ENCODE measurements at regions of chr11 and their contacts with region 1.

Region 1: DNA sequence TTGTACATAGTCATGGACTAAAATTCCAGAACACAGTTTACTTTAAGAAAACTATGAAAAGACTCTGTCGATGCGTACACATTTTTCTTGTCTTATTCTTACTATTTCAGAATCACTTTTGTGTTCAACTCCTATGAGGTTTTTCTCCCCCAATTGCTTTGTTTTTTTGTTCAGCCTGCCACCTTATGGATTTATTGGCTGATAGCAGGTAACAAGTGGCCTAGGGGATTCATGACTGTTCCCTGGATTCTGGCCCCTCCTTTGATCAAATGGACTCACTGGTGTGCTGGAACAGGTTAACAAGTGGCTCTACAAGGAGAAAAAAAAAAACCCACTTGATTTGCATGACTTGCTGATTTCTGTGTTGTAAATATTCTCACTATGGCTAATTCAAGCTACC is 10.6 kb downstream of the MMP20 start:
- DNase-seq: no peak
- ATAC-seq: no peak
- H3K4me3 ChIP-seq: no peak overlapping the region
- H3K4me3 Mint-ChIP-seq: no peak overlapping the region
- H3K27ac ChIP-seq: no peak overlapping the region
- H3K27ac Mint-ChIP-seq: no peak overlapping the region
- H3K4me1 ChIP-seq: peaks cover 17 to 26% of the 10 kb centered on the region in 2 donors
- H3K4me1 Mint-ChIP-seq: peaks cover 26% of the 10 kb centered on the region
- H3K27me3 ChIP-seq: no peaks in the 10 kb centered on the region
- H3K27me3 Mint-ChIP-seq: no peaks in the 10 kb centered on the region
- CTCF ChIP-seq: no peak

Region 2: DNA sequence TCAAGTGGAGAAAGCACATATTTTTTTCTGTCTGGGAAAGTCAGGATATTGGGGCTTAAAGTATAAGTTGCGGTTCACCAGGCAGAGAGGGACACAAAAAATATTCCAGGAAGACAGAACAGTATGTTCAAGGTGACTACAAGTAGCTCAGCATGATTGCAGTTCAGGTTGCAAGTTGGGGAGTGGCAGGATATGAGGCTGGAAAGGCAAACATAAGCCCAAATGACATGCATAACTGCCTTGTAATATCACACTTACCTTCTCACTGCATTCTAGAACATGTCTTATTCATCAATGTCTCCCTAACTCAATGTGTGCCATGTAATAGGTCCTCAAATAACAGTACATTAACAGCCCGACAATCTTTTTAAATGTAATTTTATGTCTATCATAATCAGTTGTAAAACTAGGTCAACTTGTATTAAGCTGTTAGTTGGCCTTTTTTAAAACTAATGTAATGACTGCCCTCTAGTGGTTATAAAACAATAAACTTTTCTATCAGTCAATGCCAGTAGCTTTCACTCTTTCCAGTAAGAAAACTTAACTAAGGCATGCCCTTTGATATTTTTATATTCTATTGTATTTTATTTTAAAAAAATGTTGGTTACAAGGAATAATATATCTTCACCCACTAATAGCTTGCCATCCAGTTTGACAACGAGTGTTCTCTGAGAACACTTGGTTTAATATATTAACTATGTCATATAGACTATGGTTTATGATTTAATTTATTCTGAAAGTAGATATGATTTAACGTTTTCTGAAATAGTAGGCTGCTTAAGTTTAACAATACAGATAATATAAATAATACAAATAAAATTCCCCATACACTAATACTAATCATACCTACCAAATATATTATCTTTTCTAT is 606.7 kb before region 1 on chr11:
- CTCF ChIA-PET with region 1: interaction called, 7 read pairs
- POLR2A ChIA-PET with region 1: no interaction called
- intact Hi-C with region 1: loop called (anchors 5 kb)
- DNase-seq: peak; percentile 52
- ATAC-seq: no peak
- H3K4me3 ChIP-seq: no peak overlapping the region
- H3K4me3 Mint-ChIP-seq: no peak overlapping the region
- H3K27ac ChIP-seq: no peak overlapping the region
- H3K27ac Mint-ChIP-seq: no peak overlapping the region
- H3K4me1 ChIP-seq: no peaks in the 10 kb centered on the region
- H3K4me1 Mint-ChIP-seq: no peaks in the 10 kb centered on the region
- H3K27me3 ChIP-seq: peaks cover 0 to 6% (median 5%) of the 10 kb centered on the region in 4 experiments
- H3K27me3 Mint-ChIP-seq: peaks cover 19% of the 10 kb centered on the region
- CTCF ChIP-seq: peak; percentile 81

Region 3: DNA sequence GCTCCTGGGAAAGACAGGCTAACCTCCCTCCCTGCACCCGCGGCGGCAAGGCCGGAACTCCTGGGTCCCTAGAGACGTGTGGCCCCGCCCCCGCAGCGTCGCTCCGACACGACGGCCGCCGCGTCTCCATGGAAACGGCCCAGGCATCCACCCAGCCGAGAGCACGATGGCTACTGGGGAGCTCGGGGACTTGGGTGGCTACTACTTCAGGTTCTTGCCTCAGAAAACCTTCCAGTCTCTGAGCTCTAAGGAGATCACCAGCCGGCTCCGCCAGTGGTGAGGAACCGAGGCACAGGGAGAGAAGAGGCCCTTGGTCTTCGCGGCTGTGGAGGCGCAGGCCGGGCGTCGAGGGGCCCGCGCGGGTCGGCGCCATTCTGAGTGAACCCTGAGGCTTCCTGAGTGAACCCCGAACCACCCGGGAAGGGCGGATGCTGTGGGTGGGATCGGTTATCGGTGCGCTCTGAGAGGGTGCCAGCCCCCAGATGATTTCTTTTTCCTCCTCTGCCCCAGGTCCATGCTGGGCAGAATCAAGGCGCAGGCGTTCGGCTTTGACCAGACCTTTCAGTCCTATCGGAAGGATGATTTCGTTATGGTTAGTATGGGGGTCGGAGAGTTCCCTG is 567.1 kb before region 1 on chr11 and contains the start of gene CFAP300:
- CTCF ChIA-PET with region 1: no interaction called
- POLR2A ChIA-PET with region 1: no interaction called
- intact Hi-C with region 1: no loop called
- DNase-seq: peak; percentile 20
- ATAC-seq: peak; percentile 21
- H3K4me3 ChIP-seq: peak within 1 kb of the TSS in 3 of 5 experiments; percentile 18 to 19 (median 19)
- H3K4me3 Mint-ChIP-seq: peak within 1 kb of the TSS; percentile 52
- H3K27ac ChIP-seq: no peak within 1 kb of the TSS
- H3K27ac Mint-ChIP-seq: no peak within 1 kb of the TSS
- H3K4me1 ChIP-seq: peaks cover 8% of the 10 kb centered on the region in 2 donors
- H3K4me1 Mint-ChIP-seq: peaks cover 9% of the 10 kb centered on the region
- H3K27me3 ChIP-seq: peaks cover 0 to 21% (median 14%) of the 10 kb centered on the region in 4 experiments
- H3K27me3 Mint-ChIP-seq: peaks cover 50% of the 10 kb centered on the region
- CTCF ChIP-seq: no peak
- total RNA-seq, gene CFAP300: not detected in 2 replicates

Region 4: GRCh38 chr11:102341844-102342318 is 272.6 kb before region 1 on chr11:
- CTCF ChIA-PET with region 1: interaction called, 129 read pairs
- POLR2A ChIA-PET with region 1: interaction called, 3 read pairs
- intact Hi-C with region 1: loop called (anchors 1 kb)
- DNase-seq: peak; percentile 84
- ATAC-seq: peak; percentile 48
- H3K4me3 ChIP-seq: no peak overlapping the region
- H3K4me3 Mint-ChIP-seq: no peak overlapping the region
- H3K27ac ChIP-seq: peak overlapping the region; percentile 19 to 75
- H3K27ac Mint-ChIP-seq: peak overlapping the region; percentile 43
- H3K4me1 ChIP-seq: peaks cover 14 to 16% of the 10 kb centered on the region in 2 donors
- H3K4me1 Mint-ChIP-seq: peaks cover 42% of the 10 kb centered on the region
- H3K27me3 ChIP-seq: no peaks in the 10 kb centered on the region
- H3K27me3 Mint-ChIP-seq: no peaks in the 10 kb centered on the region
- CTCF ChIP-seq: peak; percentile 80

Region 5: DNA sequence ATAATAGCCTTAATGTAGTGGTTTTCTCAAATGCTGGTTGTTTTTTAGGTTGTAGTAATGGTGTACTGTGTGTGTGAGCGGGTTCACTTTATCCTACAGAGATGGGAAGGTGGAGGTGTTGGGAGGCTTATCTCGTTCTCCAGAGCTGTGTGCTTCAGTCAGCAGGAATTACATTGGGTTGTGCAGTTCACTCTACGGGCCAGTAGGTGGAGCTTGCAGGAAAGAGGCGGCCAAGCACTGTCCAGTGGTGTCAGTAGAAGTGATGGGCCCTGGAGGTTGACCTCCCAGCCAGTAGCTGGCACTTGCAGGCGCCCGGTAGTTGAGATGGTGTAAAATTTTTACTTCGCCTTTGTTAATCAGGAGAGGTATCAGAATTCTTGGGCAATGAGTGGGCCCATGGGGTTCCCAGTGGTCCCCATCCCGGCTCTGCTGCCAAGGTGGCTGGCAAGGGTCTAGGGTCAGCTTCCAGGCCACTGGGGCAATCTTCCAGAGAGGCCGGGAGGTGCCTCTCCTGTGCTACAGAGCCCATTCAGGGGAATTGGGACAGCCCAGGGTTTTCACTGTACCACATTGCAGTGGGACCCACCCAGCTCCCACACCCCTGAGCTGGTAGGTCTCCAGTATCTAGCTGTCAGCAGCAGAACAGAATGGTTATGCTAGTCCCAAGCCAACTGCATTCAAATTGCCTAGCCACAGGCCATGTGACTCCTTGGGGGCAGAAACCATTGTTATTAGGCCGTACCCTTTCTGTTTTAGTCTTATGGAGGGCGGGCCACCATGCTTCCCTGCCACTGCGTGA is 223.6 kb before region 1 on chr11:
- CTCF ChIA-PET with region 1: interaction called, 38 read pairs
- POLR2A ChIA-PET with region 1: no interaction called
- intact Hi-C with region 1: loop called (anchors 1 kb)
- DNase-seq: peak; percentile 74
- ATAC-seq: peak; percentile 88
- H3K4me3 ChIP-seq: no peak overlapping the region
- H3K4me3 Mint-ChIP-seq: no peak overlapping the region
- H3K27ac ChIP-seq: no peak overlapping the region
- H3K27ac Mint-ChIP-seq: peak overlapping the region; percentile 46
- H3K4me1 ChIP-seq: no peaks in the 10 kb centered on the region
- H3K4me1 Mint-ChIP-seq: peaks cover 15% of the 10 kb centered on the region
- H3K27me3 ChIP-seq: no peaks in the 10 kb centered on the region
- H3K27me3 Mint-ChIP-seq: no peaks in the 10 kb centered on the region
- CTCF ChIP-seq: peak; percentile 90

Region 6: DNA sequence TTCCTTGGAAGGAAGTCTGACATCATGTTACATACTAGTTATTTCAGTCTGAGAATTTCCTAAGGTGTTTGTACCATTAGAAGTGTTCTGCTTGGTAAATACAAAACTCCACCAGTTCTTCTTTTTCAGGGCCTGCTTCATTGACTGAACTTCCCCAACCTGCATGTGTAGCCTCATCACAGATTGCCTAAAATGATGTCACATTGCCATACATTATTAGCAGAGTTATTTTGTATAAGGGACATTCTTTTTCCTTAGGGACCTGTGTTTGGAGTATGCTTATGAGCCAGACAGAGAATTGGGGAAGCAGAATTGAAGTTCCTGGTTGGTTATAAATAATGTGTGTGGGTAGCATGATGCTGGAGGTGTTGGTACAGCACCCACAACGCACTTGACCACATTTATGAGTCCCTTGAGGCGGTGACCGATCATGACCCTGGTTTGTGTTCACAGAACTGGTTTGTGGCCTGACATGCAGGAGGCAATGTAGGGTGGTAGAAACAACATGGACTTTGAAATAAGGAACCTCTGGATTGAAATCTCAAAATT is 67.5 kb before region 1 on chr11:
- CTCF ChIA-PET with region 1: interaction called, 6 read pairs
- POLR2A ChIA-PET with region 1: no interaction called
- intact Hi-C with region 1: loop called (anchors 1 kb)
- DNase-seq: peak; percentile 92
- ATAC-seq: peak; percentile 76
- H3K4me3 ChIP-seq: no peak overlapping the region
- H3K4me3 Mint-ChIP-seq: peak overlapping the region; percentile 31
- H3K27ac ChIP-seq: peak overlapping the region; percentile 86 to 98
- H3K27ac Mint-ChIP-seq: peak overlapping the region; percentile 91
- H3K4me1 ChIP-seq: peaks cover 43 to 46% of the 10 kb centered on the region in 2 donors
- H3K4me1 Mint-ChIP-seq: peaks cover 60% of the 10 kb centered on the region
- H3K27me3 ChIP-seq: no peaks in the 10 kb centered on the region
- H3K27me3 Mint-ChIP-seq: no peaks in the 10 kb centered on the region
- CTCF ChIP-seq: no peak

Region 7: DNA sequence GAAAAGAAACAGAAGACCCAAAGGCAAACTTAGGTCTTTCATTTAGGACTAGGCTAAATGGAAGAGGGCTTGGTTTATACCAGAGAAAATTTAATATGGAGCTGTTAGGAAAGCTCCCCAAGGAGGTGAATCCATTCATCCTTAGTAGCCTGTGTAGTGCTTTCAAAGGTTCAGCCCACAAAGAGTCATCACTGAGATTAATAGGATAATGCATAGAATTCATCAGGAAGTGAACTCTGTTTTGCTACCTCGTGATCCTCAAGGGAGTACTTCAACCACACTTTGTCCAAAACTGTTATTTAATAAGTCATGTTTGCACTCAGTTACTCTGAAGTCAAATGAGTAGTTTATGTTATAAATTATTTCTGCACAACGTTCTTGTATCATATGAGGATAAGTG is 40.6 kb before region 1 on chr11:
- CTCF ChIA-PET with region 1: no interaction called
- POLR2A ChIA-PET with region 1: no interaction called
- intact Hi-C with region 1: no loop called
- DNase-seq: no peak
- ATAC-seq: no peak
- H3K4me3 ChIP-seq: no peak overlapping the region
- H3K4me3 Mint-ChIP-seq: no peak overlapping the region
- H3K27ac ChIP-seq: no peak overlapping the region
- H3K27ac Mint-ChIP-seq: no peak overlapping the region
- H3K4me1 ChIP-seq: peaks cover 13 to 18% of the 10 kb centered on the region in 2 donors
- H3K4me1 Mint-ChIP-seq: peaks cover 14% of the 10 kb centered on the region
- H3K27me3 ChIP-seq: no peaks in the 10 kb centered on the region
- H3K27me3 Mint-ChIP-seq: no peaks in the 10 kb centered on the region
- CTCF ChIP-seq: no peak

Region 8: DNA sequence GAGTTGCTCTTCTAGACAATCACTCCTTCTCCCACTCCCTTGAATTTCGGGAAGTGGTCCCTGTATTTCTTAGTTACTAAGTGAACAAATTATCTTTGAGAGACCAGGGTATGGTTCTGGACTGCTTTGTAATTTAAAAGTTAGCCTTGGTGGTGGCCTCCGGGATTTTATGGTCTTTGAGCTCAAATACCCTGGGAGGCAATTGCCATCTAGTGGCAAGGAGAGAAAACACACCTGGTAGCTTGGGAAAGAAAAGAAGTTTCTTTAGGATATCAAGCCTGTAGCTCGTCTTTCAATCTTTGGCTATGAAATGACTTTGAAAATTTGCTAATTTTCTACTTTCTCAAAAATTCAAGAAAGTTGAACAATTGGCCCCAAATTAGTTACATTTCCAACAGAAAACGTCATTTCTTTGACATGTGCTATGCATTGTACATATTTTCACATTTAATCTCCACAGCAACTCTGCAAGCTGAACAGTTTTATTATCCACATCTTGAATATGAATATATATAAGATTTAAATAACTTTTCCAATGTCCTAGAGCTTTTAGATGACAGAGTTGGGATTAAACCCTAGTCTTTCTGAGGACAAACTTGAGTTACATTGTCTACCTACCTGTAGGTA is 52.0 kb after region 1 on chr11:
- CTCF ChIA-PET with region 1: interaction called, 19 read pairs
- POLR2A ChIA-PET with region 1: no interaction called
- intact Hi-C with region 1: no loop called
- DNase-seq: peak; percentile 55
- ATAC-seq: peak; percentile 36
- H3K4me3 ChIP-seq: no peak overlapping the region
- H3K4me3 Mint-ChIP-seq: no peak overlapping the region
- H3K27ac ChIP-seq: no peak overlapping the region
- H3K27ac Mint-ChIP-seq: no peak overlapping the region
- H3K4me1 ChIP-seq: peaks cover 0 to 5% of the 10 kb centered on the region in 2 donors
- H3K4me1 Mint-ChIP-seq: no peaks in the 10 kb centered on the region
- H3K27me3 ChIP-seq: no peaks in the 10 kb centered on the region
- H3K27me3 Mint-ChIP-seq: peaks cover 3% of the 10 kb centered on the region
- CTCF ChIP-seq: peak; percentile 82

Region 9: GRCh38 chr11:102940714-102941588 is 326.5 kb after region 1 on chr11:
- CTCF ChIA-PET with region 1: no interaction called
- POLR2A ChIA-PET with region 1: no interaction called
- intact Hi-C with region 1: no loop called
- DNase-seq: peak; percentile 62
- ATAC-seq: peak; percentile 41
- H3K4me3 ChIP-seq: no peak overlapping the region
- H3K4me3 Mint-ChIP-seq: no peak overlapping the region
- H3K27ac ChIP-seq: no peak overlapping the region
- H3K27ac Mint-ChIP-seq: no peak overlapping the region
- H3K4me1 ChIP-seq: no peaks in the 10 kb centered on the region
- H3K4me1 Mint-ChIP-seq: no peaks in the 10 kb centered on the region
- H3K27me3 ChIP-seq: peaks cover 0 to 5% (median 0%) of the 10 kb centered on the region in 4 experiments
- H3K27me3 Mint-ChIP-seq: peaks cover 5% of the 10 kb centered on the region
- CTCF ChIP-seq: peak; percentile 92

Measured in B cell (primary cell).